ENCODE measurements at regions of chr9 and their contacts with region 1.

Region 1: DNA sequence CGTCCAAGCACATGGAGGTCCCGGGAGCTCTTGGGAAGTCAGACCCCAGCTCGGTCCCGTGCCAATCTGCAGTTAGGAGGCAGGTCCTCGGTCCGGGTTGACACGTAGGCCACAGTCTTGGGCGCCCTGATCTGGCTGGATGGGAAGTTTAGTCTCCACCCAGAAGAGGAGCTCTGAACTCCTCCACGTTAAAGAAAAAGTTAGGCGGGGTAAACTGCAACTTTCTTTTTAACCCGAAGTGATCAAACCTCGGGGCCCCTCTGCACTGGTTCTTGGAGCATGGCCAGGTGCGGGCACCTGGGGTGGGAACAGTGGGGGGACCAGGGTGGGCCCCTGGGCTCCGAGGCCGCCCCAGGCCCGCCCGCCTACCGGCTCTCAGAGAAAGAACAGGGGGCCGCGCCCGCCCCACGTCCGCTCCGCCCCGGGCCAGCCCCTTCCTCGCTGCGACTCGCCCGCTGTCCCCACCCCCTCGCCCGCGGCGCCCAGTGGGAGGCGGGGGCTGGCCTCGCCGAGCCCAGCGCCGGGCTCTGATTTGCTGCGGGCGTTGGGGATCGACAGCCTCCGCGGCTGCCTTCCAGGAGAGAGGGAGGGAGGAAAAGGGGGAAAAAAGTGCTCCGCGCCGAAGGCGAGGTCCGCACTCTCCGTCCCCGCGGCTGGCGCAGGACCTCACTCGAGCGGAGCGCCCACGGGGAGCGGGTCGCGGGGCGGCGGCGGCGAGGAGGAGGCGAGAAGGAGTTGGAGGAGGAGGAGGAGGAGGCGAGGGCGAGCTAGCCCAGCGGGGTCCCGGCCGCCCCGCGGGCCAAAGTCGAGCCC is at the start of gene COL5A1:
- DNase-seq: peak; percentile 94 to 97
- ATAC-seq: peak; percentile 90
- H3K4me3 ChIP-seq: peak within 1 kb of the TSS; percentile 84 to 87
- H3K27ac ChIP-seq: peak within 1 kb of the TSS; percentile 29 to 93
- H3K4me1 ChIP-seq: no peaks in the 10 kb centered on the region
- H3K27me3 ChIP-seq: no peaks in the 10 kb centered on the region
- total RNA-seq, gene COL5A1: 108 to 159 TPM

Region 2: DNA sequence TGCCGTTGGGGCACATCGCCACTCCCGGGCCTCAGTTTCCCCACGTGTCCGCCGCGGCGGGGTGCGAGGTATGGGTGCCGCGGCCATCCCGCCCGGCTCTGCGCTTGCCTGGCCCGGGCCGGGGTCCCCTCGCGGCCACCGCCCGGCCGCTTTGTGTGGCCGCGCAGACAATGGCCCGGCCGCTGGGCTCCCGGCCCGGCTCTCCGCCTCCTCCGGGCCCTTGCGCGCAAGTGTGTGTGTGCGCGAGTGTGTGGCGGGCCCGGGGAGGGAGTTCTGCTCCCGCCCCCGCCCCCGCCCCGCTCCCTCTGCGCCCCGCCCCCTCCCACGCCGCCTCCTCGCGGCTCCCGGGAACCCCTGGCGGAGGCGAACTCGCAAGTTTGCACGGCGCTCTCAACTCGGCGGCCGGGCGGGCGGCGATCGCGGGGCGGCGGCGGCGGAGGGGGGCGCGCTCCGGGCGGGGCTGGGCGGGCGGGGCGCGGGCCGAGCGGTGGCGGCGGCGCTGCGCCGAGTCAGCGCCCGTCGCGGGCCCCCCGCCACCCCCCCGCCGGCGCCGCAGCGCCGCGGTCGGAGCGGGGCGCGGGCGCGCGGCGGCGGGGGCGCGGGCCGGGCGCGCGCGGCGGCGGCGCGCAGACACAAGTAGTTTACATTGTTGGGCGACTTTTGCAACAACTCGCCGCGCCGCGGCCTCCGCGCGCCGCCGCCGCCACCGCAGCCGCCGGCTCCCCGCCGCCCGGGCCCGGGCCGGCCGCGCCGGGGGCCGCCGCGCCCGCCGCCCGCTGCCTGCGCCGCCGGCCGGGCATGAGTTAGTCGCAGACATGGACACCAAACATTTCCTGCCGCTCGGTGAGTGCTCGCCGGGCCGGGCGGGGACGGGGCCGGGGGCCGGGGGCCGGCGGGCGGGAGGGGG is 315.3 kb before region 1 on chr9 and contains the start of gene RXRA:
- intact Hi-C with region 1: loop called in 1 of 2 experiments (anchors 5 kb)
- DNase-seq: peak; percentile 90 to 94
- ATAC-seq: peak; percentile 74
- H3K4me3 ChIP-seq: peak within 1 kb of the TSS; percentile 54 to 73
- H3K27ac ChIP-seq: peak within 1 kb of the TSS; percentile 86 to 93
- H3K4me1 ChIP-seq: no peaks in the 10 kb centered on the region
- H3K27me3 ChIP-seq: no peaks in the 10 kb centered on the region
- total RNA-seq, gene RXRA: 47.5 to 67.8 TPM

Region 3: GRCh38 chr9:134455934-134456739 is 185.2 kb before region 1 on chr9:
- intact Hi-C with region 1: loop called in 1 of 2 experiments (anchors 5 kb)
- DNase-seq: peak; percentile 93 to 94
- ATAC-seq: peak; percentile 90
- H3K4me3 ChIP-seq: no peak overlapping the region
- H3K27ac ChIP-seq: peak overlapping the region; percentile 64 to 88
- H3K4me1 ChIP-seq: peaks cover 0 to 4% of the 10 kb centered on the region in 2 donors
- H3K27me3 ChIP-seq: no peaks in the 10 kb centered on the region

Region 4: GRCh38 chr9:134544388-134545214 is 96.8 kb before region 1 on chr9:
- intact Hi-C with region 1: loop called (anchors 5 to 10 kb)
- DNase-seq: peak in 1 of 2 donors; percentile 74
- ATAC-seq: no peak
- H3K4me3 ChIP-seq: no peak overlapping the region
- H3K27ac ChIP-seq: peak overlapping the region in 1 of 2 donors; percentile 2
- H3K4me1 ChIP-seq: no peaks in the 10 kb centered on the region
- H3K27me3 ChIP-seq: no peaks in the 10 kb centered on the region

Region 5: DNA sequence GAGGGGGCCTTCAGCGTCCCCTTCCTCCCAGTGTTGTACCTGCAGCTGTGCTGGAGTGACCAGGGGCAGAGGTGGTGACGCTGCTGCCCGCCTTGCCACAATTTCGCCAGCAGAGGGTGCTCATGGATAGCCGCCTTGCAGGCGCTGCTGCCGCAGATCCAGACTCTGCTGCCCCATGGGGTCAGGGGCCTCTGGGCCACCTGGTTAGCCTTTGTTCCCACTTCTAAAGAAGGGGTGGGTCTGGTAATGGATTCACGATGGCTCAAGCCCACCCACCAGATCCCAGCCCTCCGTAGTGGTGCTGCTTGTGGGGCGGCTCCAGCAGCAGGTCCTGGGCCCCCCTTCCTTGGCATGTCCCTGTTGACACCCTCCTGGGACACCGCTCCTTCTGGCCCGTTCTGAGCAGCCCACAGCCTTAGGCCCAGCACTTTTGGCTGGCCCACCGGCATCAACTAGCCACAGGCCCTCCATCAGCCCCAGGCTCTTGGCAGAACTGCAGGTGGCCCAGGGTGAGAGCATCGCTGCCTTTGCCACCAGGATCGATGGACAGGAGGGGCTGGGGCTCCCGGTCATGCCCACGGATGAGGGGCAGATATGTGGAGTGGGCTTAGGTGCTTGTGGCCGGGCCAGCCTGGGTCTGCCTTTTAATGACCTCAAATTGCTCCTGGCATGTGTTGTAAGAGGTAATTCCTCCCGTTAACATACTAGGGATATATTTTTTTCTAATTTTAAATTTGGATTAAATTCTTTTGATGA is 57.4 kb after region 1 on chr9:
- intact Hi-C with region 1: loop called in 1 of 2 experiments (anchors 10 kb)
- DNase-seq: peak; percentile 76 to 91
- ATAC-seq: peak; percentile 74
- H3K4me3 ChIP-seq: no peak overlapping the region
- H3K27ac ChIP-seq: no peak overlapping the region
- H3K4me1 ChIP-seq: no peaks in the 10 kb centered on the region
- H3K27me3 ChIP-seq: no peaks in the 10 kb centered on the region